Uterus (tissue), 4 donors: ENCODE measurements at regions of chr16 and their contacts with region 1.

Region 1: DNA sequence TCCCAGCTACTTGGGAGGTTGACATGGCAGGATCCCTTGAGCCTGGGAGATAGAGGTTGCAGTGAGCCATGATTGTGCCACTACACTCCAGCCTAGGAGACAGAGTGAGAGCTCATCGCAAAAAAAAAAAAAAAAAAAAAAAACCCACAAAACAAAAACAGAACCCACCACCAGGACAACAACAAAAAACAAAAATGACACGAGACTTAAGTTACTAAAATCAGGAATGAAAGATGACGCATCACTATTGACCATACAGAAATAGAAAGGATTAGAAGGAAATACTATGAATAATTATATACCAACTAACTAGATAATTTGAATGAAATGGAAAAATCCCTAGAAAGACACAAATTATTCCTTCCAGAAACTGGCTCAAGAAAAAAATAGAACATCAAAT is 432.4 kb upstream of the PMFBP1 start:
- DNase-seq: no peak
- H3K4me3 ChIP-seq: no peak overlapping the region
- H3K27ac ChIP-seq: no peak overlapping the region
- H3K4me1 ChIP-seq: no peaks in the 10 kb centered on the region
- H3K27me3 ChIP-seq: no peaks in the 10 kb centered on the region
- CTCF ChIP-seq: no peak
- POLR2A ChIP-seq: no peak

Region 2: GRCh38 chr16:73015612-73016487 is 411.5 kb after region 1 on chr16:
- intact Hi-C with region 1: loop called (anchors 10 kb)
- DNase-seq: no peak
- H3K4me3 ChIP-seq: no peak overlapping the region
- H3K27ac ChIP-seq: no peak overlapping the region
- H3K4me1 ChIP-seq: no peaks in the 10 kb centered on the region
- H3K27me3 ChIP-seq: no peaks in the 10 kb centered on the region
- CTCF ChIP-seq: no peak
- POLR2A ChIP-seq: no peak